Common myeloid progenitor, CD34-positive (primary cell): ENCODE measurements at regions of chr16 and their contacts with region 1.

Region 1: DNA sequence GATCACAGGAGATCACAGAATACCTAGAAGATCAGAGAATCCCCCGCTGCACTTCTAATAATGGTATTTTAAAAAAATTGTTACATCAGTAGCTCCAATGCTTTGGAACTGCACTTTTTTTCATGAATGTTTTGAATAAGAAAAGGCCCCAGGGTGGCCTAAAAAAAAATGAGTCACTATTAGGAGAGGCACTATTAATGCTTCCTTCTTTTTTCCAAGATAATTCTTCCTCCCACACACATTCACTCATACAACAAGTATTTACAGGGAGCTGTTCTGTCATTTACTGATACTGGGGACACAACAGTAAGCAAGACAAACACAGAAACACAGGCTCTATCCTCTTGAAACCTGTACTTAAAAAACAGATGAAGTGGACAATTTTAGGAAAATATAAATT is 675 bp upstream of the PDZD9 start:
- DNase-seq: no peak
- H3K4me3 ChIP-seq: no peak overlapping the region
- H3K27ac ChIP-seq: no peak overlapping the region
- H3K4me1 ChIP-seq: peaks cover 5 to 16% (median 8%) of the 10 kb centered on the region in 4 experiments
- H3K27me3 ChIP-seq: peaks cover 0 to 2% (median 0%) of the 10 kb centered on the region in 5 experiments

Region 2: DNA sequence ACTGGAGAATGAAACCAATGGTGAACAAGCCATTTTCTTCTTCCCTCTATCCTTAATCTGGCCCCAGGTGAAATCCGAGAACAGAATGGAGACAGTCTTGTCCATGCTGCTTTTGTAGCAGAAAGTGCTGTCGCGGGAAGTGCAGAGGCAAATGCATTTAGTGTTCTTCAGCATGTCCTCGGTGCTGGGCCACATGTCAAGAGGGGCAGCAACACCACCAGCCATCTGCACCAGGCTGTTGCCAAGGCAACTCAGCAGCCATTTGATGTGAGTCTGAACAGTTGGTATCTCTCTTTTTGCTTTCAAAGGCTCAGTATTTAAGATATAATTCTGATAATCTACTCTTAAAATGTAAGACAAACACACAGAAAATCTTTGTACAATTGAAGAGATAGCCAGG is 29.7 kb before region 1 on chr16:
- CTCF ChIA-PET with region 1: no interaction called
- POLR2A ChIA-PET with region 1: no interaction called
- DNase-seq: no peak
- H3K4me3 ChIP-seq: no peak overlapping the region
- H3K27ac ChIP-seq: no peak overlapping the region
- H3K4me1 ChIP-seq: no peaks in the 10 kb centered on the region
- H3K27me3 ChIP-seq: no peaks in the 10 kb centered on the region

Region 3: DNA sequence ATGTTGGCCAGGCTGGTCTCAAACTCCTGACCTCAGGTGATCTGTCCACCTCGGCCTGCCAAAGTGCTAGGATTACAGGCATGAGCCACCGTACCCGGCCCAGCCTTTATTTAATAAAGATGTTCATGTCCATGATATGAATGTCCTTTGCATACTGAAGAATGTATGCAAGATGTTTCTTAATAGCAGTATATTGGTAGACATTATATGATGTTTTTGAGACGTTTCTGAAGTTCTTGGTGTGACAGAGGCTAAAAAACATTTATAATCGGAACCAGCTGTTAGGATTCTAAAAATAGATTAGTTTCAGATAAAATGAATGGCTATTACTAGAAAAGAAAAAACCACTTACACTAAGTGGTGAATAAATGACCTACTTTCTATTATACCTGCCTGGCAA is 12.5 kb before region 1 on chr16:
- CTCF ChIA-PET with region 1: interaction called, 20 read pairs
- POLR2A ChIA-PET with region 1: no interaction called
- DNase-seq: no peak
- H3K4me3 ChIP-seq: no peak overlapping the region
- H3K27ac ChIP-seq: no peak overlapping the region
- H3K4me1 ChIP-seq: no peaks in the 10 kb centered on the region
- H3K27me3 ChIP-seq: no peaks in the 10 kb centered on the region

Region 4: GRCh38 chr16:22070361-22071330 is 69.1 kb after region 1 on chr16:
- CTCF ChIA-PET with region 1: interaction called, 181 read pairs
- POLR2A ChIA-PET with region 1: no interaction called
- DNase-seq: peak in 1 of 3 donors; percentile 22
- H3K4me3 ChIP-seq: no peak overlapping the region
- H3K27ac ChIP-seq: no peak overlapping the region
- H3K4me1 ChIP-seq: peaks cover 0 to 8% (median 0%) of the 10 kb centered on the region in 4 experiments
- H3K27me3 ChIP-seq: no peaks in the 10 kb centered on the region